ENCODE measurements at regions of chr18 and their contacts with region 1.

Region 1: DNA sequence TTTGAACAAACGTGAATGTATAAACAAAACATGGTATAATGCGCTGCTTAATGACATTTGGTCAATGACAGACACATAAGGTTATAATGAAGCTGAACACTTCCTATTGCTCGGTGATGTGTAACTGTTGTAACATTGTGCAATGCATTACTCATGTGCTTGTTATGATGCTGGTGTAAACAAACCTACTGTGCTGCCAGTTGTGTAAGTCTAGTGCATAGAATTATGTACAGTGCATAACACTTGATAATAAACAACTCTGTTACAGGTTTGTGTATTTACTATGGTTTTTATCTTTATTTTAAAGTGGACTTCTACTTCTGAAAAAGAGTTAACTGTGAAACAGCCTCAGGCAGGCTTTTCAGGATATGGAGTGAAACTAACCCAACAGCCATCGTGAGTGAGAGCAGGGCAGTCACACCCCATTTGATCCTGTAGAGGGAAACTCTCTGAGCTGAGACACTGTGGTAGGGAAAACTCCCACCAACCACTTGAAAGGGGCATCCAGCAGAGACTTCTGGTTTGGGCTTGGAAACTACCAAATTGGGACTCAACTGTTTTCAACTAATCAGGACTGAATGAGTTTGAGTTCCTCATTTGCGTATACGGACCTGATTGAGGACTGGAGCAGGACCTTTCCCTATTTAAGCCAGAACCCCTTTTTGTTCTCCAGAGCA is 8.7 kb upstream of the RPRD1A start:
- DNase-seq: no peak
- ATAC-seq: peak in 1 of 2 donors; percentile 32
- H3K4me3 Mint-ChIP-seq: no peak overlapping the region
- H3K27ac Mint-ChIP-seq: no peak overlapping the region
- H3K4me1 Mint-ChIP-seq: peaks cover 0 to 1% (median 0%) of the 10 kb centered on the region in 4 donors
- H3K27me3 Mint-ChIP-seq: peaks cover 0 to 9% (median 6%) of the 10 kb centered on the region in 5 donors

Region 2: GRCh38 chr18:36101943-36102342 is 25.9 kb after region 1 on chr18:
- POLR2A ChIA-PET with region 1: interaction called, 11 read pairs
- DNase-seq: no peak
- ATAC-seq: no peak
- H3K4me3 Mint-ChIP-seq: no peak overlapping the region
- H3K27ac Mint-ChIP-seq: peak overlapping the region in 1 of 10 donors; percentile 29
- H3K4me1 Mint-ChIP-seq: no peaks in the 10 kb centered on the region
- H3K27me3 Mint-ChIP-seq: peaks cover 0 to 10% (median 0%) of the 10 kb centered on the region in 5 donors

Measured in naive thymus-derived CD8-positive, alpha-beta T cell (primary cell).